Sigmoid colon (tissue), 7 donors: ENCODE measurements at regions of chr12 and their contacts with region 1.

Region 1: GRCh38 chr12:82685790-82686167 is 927 bp upstream of the TMTC2 start:
- DNase-seq: peak; percentile 98
- H3K4me3 ChIP-seq: peak overlapping the region; percentile 91 to 97 (median 92)
- H3K27ac ChIP-seq: peak overlapping the region; percentile 90 to 98 (median 96)
- H3K4me1 ChIP-seq: peaks cover 0 to 40% (median 29%) of the 10 kb centered on the region in 4 donors
- H3K27me3 ChIP-seq: no peaks in the 10 kb centered on the region
- CTCF ChIP-seq: peak; percentile 86 to 93 (median 90)
- EP300 ChIP-seq: no peak
- POLR2A ChIP-seq: no peak

Region 2: DNA sequence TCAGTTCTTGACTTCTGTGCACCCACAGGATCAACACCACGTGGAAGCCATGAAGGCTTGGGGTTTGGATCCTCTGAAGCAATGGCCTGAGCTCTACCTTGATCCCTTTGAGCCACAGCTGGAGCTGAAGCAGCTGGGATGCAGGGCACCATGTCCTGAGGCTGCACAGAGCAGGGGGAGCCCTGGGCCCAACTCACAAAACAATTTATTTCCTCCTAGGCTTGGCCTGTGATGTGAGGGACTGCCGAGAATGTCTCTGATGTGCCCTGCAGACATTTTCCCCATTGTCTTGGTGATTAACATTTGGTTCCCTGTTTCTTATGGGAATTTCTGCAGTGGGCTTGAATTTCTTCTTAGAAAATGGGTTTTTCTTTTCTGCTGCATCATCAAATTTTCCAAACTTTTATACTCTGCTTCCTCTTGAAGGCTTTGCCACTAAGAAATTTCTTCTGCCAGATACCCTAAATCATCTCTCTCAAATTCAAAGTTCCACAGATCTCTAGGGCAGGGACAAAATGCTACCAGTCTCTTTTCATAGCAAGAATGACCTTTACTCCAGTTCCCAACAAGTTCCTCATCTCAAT is 615.8 kb before region 1 on chr12:
- intact Hi-C with region 1: no loop called
- DNase-seq: no peak
- H3K4me3 ChIP-seq: no peak overlapping the region
- H3K27ac ChIP-seq: no peak overlapping the region
- H3K4me1 ChIP-seq: no peaks in the 10 kb centered on the region
- H3K27me3 ChIP-seq: no peaks in the 10 kb centered on the region
- CTCF ChIP-seq: no peak
- EP300 ChIP-seq: no peak
- POLR2A ChIP-seq: no peak

Region 3: GRCh38 chr12:82835217-82835616 is 149.4 kb after region 1 on chr12:
- intact Hi-C with region 1: no loop called
- DNase-seq: no peak
- H3K4me3 ChIP-seq: no peak overlapping the region
- H3K27ac ChIP-seq: peak overlapping the region in 1 of 4 donors; percentile 50
- H3K4me1 ChIP-seq: peaks cover 0 to 40% (median 28%) of the 10 kb centered on the region in 4 donors
- H3K27me3 ChIP-seq: no peaks in the 10 kb centered on the region
- CTCF ChIP-seq: no peak
- EP300 ChIP-seq: no peak
- POLR2A ChIP-seq: no peak

Region 4: DNA sequence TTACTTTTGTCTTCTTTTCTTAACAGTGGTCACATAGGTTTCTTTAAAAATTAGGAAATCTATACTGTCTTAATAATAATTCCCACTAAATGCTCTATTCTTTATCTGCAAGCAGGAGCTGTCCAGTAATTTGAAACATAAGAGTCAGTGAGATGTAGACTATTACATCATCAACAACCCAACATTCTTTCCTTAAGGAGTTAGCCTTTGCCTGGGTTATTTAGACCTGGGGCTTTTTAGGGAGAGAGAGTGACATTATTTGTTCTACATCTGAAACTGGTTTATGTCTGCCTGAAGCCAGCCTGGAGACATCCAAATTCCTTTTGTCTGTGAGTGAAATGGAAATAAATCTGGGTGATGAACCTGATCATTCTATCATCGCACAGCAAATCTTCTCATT is 295.4 kb after region 1 on chr12:
- intact Hi-C with region 1: loop called (anchors 10 kb)
- DNase-seq: no peak
- H3K4me3 ChIP-seq: no peak overlapping the region
- H3K27ac ChIP-seq: peak overlapping the region in 2 of 4 donors; percentile 22 to 31
- H3K4me1 ChIP-seq: peaks cover 0 to 19% (median 9%) of the 10 kb centered on the region in 4 donors
- H3K27me3 ChIP-seq: no peaks in the 10 kb centered on the region
- CTCF ChIP-seq: no peak
- EP300 ChIP-seq: no peak
- POLR2A ChIP-seq: no peak

Region 5: GRCh38 chr12:83128540-83128939 is 442.8 kb after region 1 on chr12:
- intact Hi-C with region 1: loop called (anchors 10 kb)
- DNase-seq: no peak
- H3K4me3 ChIP-seq: no peak overlapping the region
- H3K27ac ChIP-seq: no peak overlapping the region
- H3K4me1 ChIP-seq: peaks cover 0 to 28% (median 12%) of the 10 kb centered on the region in 4 donors
- H3K27me3 ChIP-seq: no peaks in the 10 kb centered on the region
- CTCF ChIP-seq: no peak
- EP300 ChIP-seq: no peak
- POLR2A ChIP-seq: no peak

Region 6: DNA sequence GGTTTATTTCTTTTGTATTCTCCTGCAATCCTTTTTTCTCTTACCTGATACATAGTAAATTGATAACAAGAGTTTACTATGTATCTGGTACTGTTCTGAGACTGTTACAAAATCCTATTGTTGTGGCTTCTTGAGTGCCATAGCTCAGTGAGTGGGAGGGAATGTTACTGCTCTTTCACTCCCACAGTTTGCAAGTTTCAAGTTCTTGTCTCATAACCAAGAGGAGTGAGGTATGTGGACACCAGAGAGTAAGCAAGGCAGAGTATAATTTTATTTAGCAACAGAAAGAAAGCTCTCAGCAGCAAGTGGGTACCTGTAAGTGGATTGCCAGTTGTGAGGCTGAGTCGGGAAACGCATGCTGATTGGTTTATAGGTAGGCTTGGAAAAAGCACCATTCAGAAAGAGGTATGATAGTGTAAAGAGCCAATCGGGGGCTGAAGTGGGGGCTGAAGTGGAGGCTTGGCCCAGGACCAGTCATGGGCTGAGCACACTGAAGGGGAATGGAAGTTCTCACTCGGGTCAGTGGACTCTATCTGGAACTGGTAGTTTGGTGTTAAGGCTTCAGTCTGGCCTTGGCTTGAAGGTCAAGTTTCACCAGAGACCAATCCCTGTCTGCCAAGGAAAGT is 851.8 kb after region 1 on chr12:
- intact Hi-C with region 1: loop called (anchors 10 kb)
- DNase-seq: no peak
- H3K4me3 ChIP-seq: no peak overlapping the region
- H3K27ac ChIP-seq: peak overlapping the region in 2 of 4 donors; percentile 12 to 16
- H3K4me1 ChIP-seq: peaks cover 0 to 24% (median 10%) of the 10 kb centered on the region in 4 donors
- H3K27me3 ChIP-seq: no peaks in the 10 kb centered on the region
- CTCF ChIP-seq: no peak
- EP300 ChIP-seq: no peak
- POLR2A ChIP-seq: no peak

Region 7: GRCh38 chr12:84502907-84503787 is 1817.4 kb after region 1 on chr12:
- intact Hi-C with region 1: loop called (anchors 5 kb)
- DNase-seq: no peak
- H3K4me3 ChIP-seq: no peak overlapping the region
- H3K27ac ChIP-seq: no peak overlapping the region
- H3K4me1 ChIP-seq: peaks cover 0 to 8% (median 5%) of the 10 kb centered on the region in 4 donors
- H3K27me3 ChIP-seq: no peaks in the 10 kb centered on the region
- CTCF ChIP-seq: peak in 3 of 4 experiments; percentile 40 to 56 (median 54)
- EP300 ChIP-seq: no peak
- POLR2A ChIP-seq: no peak